ENCODE measurements at regions of chr1 and their contacts with region 1.

Region 1: GRCh38 chr1:201845331-201846083 is 16.6 kb downstream of the IPO9 start:
- DNase-seq: no peak
- H3K4me3 ChIP-seq: no peak overlapping the region
- H3K27ac ChIP-seq: 0 out of 2 replicates have a peak overlapping the region, but pooled peaks have one; percentile 5
- H3K4me1 ChIP-seq: peaks cover 33% of the 10 kb centered on the region
- H3K27me3 ChIP-seq: no peaks in the 10 kb centered on the region
- CTCF ChIP-seq: no peak

Region 2: GRCh38 chr1:201488817-201489589 is 356.5 kb before region 1 on chr1:
- CTCF ChIA-PET with region 1: no interaction called
- POLR2A ChIA-PET with region 1: no interaction called
- intact Hi-C with region 1: no loop called
- DNase-seq: peak; percentile 92 to 95
- H3K4me3 ChIP-seq: no peak overlapping the region
- H3K27ac ChIP-seq: peak overlapping the region; percentile 78
- H3K4me1 ChIP-seq: peaks cover 43% of the 10 kb centered on the region
- H3K27me3 ChIP-seq: no peaks in the 10 kb centered on the region
- CTCF ChIP-seq: no peak

Region 3: GRCh38 chr1:201670555-201670954 is 175.0 kb before region 1 on chr1:
- CTCF ChIA-PET with region 1: interaction called, 14 read pairs
- POLR2A ChIA-PET with region 1: no interaction called
- intact Hi-C with region 1: no loop called
- DNase-seq: no peak
- H3K4me3 ChIP-seq: no peak overlapping the region
- H3K27ac ChIP-seq: no peak overlapping the region
- H3K4me1 ChIP-seq: no peaks in the 10 kb centered on the region
- H3K27me3 ChIP-seq: no peaks in the 10 kb centered on the region
- CTCF ChIP-seq: no peak

Region 4: DNA sequence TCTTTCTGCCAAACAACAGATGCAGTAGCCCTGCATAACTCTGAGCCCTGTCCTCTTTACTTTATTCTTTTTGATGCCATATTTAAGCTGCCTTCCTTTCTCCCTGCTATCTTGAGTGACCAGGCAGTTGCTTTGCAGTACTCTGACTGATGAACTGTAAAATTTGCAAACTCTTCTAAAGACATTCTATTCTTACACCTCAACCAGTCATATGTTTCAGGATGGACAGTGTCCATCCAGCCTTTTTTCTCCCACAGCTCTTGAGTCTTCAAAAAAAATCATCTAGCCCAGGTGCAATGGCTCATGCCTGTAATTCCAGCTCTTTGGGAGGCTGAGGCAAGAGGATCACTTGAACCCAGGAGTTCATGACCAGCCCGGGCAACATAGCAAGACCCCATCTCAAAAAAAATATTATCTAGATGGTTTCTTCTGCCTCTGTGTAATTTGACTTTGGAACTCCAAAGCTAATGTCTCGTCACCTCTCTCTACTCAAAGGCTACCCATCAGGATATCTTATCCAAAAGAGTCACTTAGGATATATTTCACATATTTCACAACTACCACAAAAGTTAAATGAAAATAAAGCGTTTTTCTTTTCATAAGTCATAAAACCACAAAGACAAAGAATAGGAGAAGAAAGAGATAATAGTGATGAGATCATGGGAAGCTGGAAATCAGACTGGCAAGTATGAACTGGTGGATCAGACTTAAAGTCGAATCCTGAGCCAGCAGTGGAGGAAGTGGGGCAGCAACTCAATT is 71.1 kb before region 1 on chr1:
- CTCF ChIA-PET with region 1: no interaction called
- POLR2A ChIA-PET with region 1: no interaction called
- intact Hi-C with region 1: no loop called
- DNase-seq: no peak
- H3K4me3 ChIP-seq: no peak overlapping the region
- H3K27ac ChIP-seq: no peak overlapping the region
- H3K4me1 ChIP-seq: no peaks in the 10 kb centered on the region
- H3K27me3 ChIP-seq: no peaks in the 10 kb centered on the region
- CTCF ChIP-seq: no peak